Left lung (tissue), 14 donors: ENCODE measurements at regions of chr11 and their contacts with region 1.

Region 1: GRCh38 chr11:12249590-12250260 is 127.6 kb upstream of the PARVA start:
- DNase-seq: peak in 1 of 4 donors; percentile 51
- ATAC-seq: no peak
- H3K4me3 ChIP-seq: no peak overlapping the region
- H3K27ac ChIP-seq: peak overlapping the region; percentile 14 to 33
- H3K4me1 ChIP-seq: peaks cover 0 to 9% of the 10 kb centered on the region in 2 donors
- H3K27me3 ChIP-seq: no peaks in the 10 kb centered on the region
- CTCF ChIP-seq: no peak

Region 2: GRCh38 chr11:12070446-12071267 is 179.1 kb before region 1 on chr11:
- intact Hi-C with region 1: loop called in 1 of 2 experiments (anchors 5 kb)
- DNase-seq: peak in 2 of 4 donors; percentile 24 to 51
- ATAC-seq: no peak
- H3K4me3 ChIP-seq: no peak overlapping the region
- H3K27ac ChIP-seq: no peak overlapping the region
- H3K4me1 ChIP-seq: peaks cover 8 to 16% of the 10 kb centered on the region in 2 donors
- H3K27me3 ChIP-seq: no peaks in the 10 kb centered on the region
- CTCF ChIP-seq: no peak

Region 3: DNA sequence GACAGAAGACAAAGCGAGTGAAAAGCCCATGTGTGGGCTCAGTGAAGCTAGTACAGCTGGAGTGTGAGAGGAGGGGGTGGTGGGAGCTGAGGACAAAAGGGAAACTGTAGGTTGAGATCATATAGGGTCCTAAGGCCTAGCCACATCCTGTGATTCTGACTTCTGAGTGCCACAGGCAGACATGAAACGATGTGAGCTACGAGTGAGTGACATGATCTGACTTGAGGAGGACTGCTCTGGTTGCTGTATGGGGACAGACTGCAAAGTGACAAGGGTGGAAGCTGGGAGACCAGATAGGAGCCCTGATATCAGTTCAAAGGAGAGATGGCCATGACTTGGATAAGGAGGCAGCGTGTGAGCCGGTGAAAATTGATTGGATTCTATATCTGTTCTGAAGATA is 54.0 kb before region 1 on chr11:
- intact Hi-C with region 1: no loop called
- DNase-seq: no peak
- ATAC-seq: no peak
- H3K4me3 ChIP-seq: no peak overlapping the region
- H3K27ac ChIP-seq: peak overlapping the region in 1 of 2 donors; percentile 5
- H3K4me1 ChIP-seq: peaks cover 14 to 26% of the 10 kb centered on the region in 2 donors
- H3K27me3 ChIP-seq: no peaks in the 10 kb centered on the region
- CTCF ChIP-seq: no peak

Region 4: DNA sequence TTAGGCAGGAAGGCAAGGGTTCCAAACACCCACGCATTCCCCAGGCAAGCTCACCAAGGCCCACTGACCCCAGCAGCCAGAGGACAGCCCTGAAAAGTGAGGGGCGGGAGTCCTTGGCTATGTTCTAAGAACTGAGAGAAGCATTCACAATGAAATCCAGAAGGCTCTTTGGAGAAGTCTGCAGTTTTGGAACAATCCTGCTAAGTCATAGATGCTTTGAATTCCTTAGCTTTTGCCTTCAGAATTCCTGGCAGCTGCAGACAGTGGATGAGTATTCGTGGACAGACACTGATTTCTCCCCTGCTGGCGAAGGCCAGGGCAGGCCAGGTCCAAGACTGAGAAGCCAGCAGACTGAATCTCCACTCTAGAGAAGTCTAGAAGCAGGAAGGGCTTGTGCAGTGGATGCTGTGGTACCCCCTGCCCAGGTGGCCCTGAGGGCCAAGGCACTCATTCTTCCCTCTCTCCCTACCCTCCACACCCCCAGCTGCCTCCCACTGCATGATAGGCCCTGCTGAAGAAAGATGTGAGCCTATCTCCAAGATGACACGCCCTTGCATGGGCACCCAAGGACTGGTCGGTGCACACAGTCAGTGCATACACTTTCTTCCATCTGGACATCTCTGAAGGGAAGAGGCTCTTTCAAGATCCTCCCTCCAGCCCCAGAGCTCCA is 291.3 kb after region 1 on chr11:
- intact Hi-C with region 1: no loop called
- DNase-seq: peak in 1 of 4 donors; percentile 14
- ATAC-seq: peak; percentile 23
- H3K4me3 ChIP-seq: no peak overlapping the region
- H3K27ac ChIP-seq: no peak overlapping the region
- H3K4me1 ChIP-seq: peaks cover 2 to 4% of the 10 kb centered on the region in 2 donors
- H3K27me3 ChIP-seq: no peaks in the 10 kb centered on the region
- CTCF ChIP-seq: no peak